Activated CD8-positive, alpha-beta T cell treated with anti-CD3 and anti-CD28 coated beads, Interleukin-2, amount 10 ng/mL, durations not matched to agents 7 days and 5 days (primary cell): ENCODE measurements at regions of chr13 and their contacts with region 1.

Region 1: GRCh38 chr13:24683838-24684599 is 3.8 kb downstream of the ATP12A start:
- DNase-seq: peak; percentile 76
- ATAC-seq: peak; percentile 50
- H3K4me3 Mint-ChIP-seq: no peak overlapping the region
- H3K27ac Mint-ChIP-seq: no peak overlapping the region
- H3K4me1 Mint-ChIP-seq: peaks cover 38% of the 10 kb centered on the region
- H3K27me3 Mint-ChIP-seq: peaks cover 51% of the 10 kb centered on the region

Region 2: DNA sequence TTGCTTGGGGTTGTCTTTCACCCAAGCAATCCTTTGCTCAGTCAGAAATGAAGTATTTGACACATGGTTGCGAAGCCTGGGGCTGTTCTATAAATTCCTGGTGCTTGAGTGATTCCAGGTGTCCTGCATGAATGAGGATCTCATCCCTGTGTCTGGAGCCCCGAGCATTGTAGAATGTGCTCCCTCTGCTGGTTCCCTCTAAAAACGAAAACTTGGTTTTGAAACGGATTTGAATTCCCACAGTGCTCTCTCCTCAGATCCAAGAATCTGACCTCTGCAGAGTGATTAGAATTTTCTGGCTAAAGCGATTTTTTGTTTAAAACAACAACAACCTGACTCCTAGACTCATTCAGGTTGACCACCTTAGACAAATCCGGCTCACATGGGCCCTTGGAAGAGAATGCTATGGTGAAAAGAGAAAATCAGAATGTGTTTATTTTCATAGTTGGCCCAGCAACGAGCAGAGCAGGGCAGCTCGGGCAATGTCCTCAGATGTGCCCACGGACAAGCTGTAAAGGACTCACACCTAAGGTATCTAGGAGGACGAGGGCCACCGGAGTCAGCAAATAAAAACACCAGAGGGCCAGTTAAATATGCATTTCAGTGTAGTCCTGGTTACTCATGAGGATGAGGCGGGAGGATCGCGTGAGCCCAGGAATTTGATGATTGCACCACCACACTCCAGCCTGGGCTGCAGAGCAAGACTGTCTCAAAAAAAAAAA is 12.5 kb before region 1 on chr13:
- CTCF ChIA-PET with region 1: interaction called, 21 read pairs
- POLR2A ChIA-PET with region 1: no interaction called
- DNase-seq: peak; percentile 36
- ATAC-seq: peak; percentile 44
- H3K4me3 Mint-ChIP-seq: no peak overlapping the region
- H3K27ac Mint-ChIP-seq: no peak overlapping the region
- H3K4me1 Mint-ChIP-seq: peaks cover 11% of the 10 kb centered on the region
- H3K27me3 Mint-ChIP-seq: peaks cover 25% of the 10 kb centered on the region

Region 3: DNA sequence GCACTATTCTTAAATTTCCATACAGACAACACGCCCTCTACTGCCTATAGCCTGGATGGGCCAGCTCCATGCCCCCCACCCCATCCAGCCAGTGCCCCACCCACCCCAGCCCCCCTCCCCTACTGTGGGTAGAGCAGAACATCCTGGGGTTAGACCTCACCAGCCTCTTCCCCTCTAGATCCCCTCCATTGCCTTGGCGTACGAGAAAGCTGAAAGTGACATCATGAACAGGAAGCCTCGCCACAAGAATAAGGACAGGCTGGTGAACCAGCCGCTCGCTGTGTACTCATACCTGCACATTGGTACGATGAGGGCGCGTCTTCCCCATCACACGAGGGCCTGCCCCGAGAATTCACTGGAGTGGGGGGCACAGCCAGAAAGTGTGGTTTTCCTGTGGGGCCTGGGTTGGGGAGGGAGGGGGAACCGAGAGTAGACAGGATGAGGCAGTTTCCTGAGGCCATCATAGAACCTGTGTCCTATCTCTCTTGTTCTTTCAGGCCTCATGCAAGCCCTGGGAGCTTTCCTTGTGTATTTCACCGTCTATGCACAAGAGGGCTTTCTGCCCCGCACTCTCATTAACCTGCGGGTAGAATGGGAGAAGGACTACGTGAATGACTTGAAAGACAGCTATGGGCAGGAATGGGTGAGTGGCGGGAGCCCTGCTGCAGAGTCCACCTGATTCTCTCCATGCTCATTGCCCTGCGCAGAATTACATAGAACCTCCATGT is 25.3 kb after region 1 on chr13:
- CTCF ChIA-PET with region 1: interaction called, 10 read pairs
- POLR2A ChIA-PET with region 1: interaction called, 4 read pairs
- DNase-seq: peak; percentile 86
- ATAC-seq: peak; percentile 97
- H3K4me3 Mint-ChIP-seq: peak overlapping the region; percentile 32
- H3K27ac Mint-ChIP-seq: peak overlapping the region; percentile 85
- H3K4me1 Mint-ChIP-seq: peaks cover 46% of the 10 kb centered on the region
- H3K27me3 Mint-ChIP-seq: peaks cover 10% of the 10 kb centered on the region